Panc1 (cell line): ENCODE measurements at regions of chr3 and their contacts with region 1.

Region 1: GRCh38 chr3:38117748-38118420 is 19.0 kb downstream of the ACAA1 start:
- DNase-seq: peak; percentile 59
- ATAC-seq: peak; percentile 70
- H3K4me3 ChIP-seq: no peak overlapping the region
- H3K27ac ChIP-seq: no peak overlapping the region
- H3K4me1 ChIP-seq: no peaks in the 10 kb centered on the region
- H3K27me3 ChIP-seq: no peaks in the 10 kb centered on the region
- CTCF ChIP-seq: peak; percentile 76

Region 2: DNA sequence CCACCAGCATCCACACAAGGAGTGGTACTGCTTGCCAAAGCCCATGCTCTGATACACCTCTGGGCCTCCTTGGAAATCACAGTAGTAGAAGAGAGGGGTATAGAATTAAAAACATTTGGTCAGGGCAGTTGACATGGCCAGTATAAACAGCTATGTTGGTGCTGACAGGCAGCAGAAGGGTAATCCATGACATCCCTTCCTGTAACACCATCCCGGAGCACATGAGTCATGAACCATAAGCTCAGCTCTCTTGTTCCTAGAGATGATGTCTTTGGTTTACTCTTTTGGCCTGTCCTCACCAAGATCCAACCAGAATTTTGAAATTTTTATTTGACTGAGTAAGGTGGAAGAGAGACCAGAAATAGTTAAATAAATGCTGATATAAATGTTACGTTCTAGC is 388.8 kb before region 1 on chr3:
- CTCF ChIA-PET with region 1: no interaction called
- POLR2A ChIA-PET with region 1: no interaction called
- in situ Hi-C with region 1: no loop called
- intact Hi-C with region 1: no loop called
- DNase-seq: no peak
- ATAC-seq: no peak
- H3K4me3 ChIP-seq: no peak overlapping the region
- H3K27ac ChIP-seq: no peak overlapping the region
- H3K4me1 ChIP-seq: no peaks in the 10 kb centered on the region
- H3K27me3 ChIP-seq: peaks cover 2% of the 10 kb centered on the region; the same call in 1 of the 2 replicates
- CTCF ChIP-seq: no peak

Region 3: GRCh38 chr3:38157117-38157516 is 39.2 kb after region 1 on chr3:
- CTCF ChIA-PET with region 1: interaction called, 10 read pairs
- POLR2A ChIA-PET with region 1: no interaction called
- in situ Hi-C with region 1: no loop called
- intact Hi-C with region 1: no loop called
- DNase-seq: no peak
- ATAC-seq: no peak
- H3K4me3 ChIP-seq: no peak overlapping the region
- H3K27ac ChIP-seq: no peak overlapping the region
- H3K4me1 ChIP-seq: no peaks in the 10 kb centered on the region
- H3K27me3 ChIP-seq: no peaks in the 10 kb centered on the region
- CTCF ChIP-seq: no peak

Region 4: GRCh38 chr3:38411591-38411990 is 293.7 kb after region 1 on chr3:
- CTCF ChIA-PET with region 1: no interaction called
- POLR2A ChIA-PET with region 1: no interaction called
- in situ Hi-C with region 1: no loop called
- intact Hi-C with region 1: no loop called
- DNase-seq: no peak
- ATAC-seq: no peak
- H3K4me3 ChIP-seq: no peak overlapping the region
- H3K27ac ChIP-seq: no peak overlapping the region
- H3K4me1 ChIP-seq: no peaks in the 10 kb centered on the region
- H3K27me3 ChIP-seq: no peaks in the 10 kb centered on the region
- CTCF ChIP-seq: no peak